Activated CD8-positive, alpha-beta memory T cell treated with anti-CD3 and anti-CD28 coated beads, Interleukin-2, amount 10 ng/mL, durations not matched to agents 7 days and 5 days (primary cell): ENCODE measurements at regions of chr10 and their contacts with region 1.

Region 1: GRCh38 chr10:6401562-6402348 is 178.3 kb downstream of the PRKCQ start:
- DNase-seq: peak; percentile 72
- ATAC-seq: peak; percentile 89
- H3K4me3 Mint-ChIP-seq: no peak overlapping the region
- H3K27ac Mint-ChIP-seq: no peak overlapping the region
- H3K4me1 Mint-ChIP-seq: peaks cover 35% of the 10 kb centered on the region
- H3K27me3 Mint-ChIP-seq: peaks cover 17% of the 10 kb centered on the region

Region 2: DNA sequence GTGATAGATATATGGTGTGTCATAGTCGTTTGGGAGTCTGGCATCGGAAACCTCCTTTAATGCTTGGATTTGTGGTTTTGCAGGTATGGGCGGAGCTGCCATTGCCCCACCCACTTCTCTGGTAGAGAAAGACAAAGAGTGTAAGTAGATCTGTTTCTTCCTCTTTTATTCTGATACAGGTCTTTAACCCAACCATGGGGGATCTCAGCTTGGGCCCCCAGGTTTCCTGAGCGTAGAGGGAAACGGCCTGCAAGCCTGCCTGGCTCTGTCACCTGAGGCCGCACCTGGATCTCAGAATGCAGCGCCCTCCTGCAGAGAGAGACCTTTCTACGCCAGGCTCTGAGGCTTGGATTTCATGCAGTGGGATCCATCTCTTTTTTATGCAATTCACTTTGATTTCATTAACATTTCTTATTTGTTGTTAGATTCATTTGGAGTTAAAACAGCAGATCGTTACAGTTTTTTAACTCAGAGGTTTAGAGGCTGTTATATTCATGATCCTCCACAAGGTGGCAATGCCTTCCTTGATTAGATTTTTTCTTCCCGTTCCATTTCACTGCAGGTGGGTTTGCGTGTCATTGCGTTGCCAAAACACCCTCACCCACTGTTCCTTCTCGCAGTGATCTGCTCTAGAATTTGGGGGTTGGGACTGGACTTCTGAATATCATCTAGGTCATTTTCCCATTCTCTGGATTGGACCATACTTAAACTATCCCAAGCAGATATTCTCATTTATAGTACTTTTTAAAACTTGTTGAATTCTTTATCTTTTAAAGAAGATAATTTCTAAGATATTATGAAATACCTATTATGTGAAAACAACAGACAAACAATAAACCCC is 292.9 kb before region 1 on chr10:
- CTCF ChIA-PET with region 1: interaction called, 23 read pairs
- DNase-seq: peak; percentile 54
- ATAC-seq: peak; percentile 53
- H3K4me3 Mint-ChIP-seq: no peak overlapping the region
- H3K27ac Mint-ChIP-seq: peak overlapping the region; percentile 77
- H3K4me1 Mint-ChIP-seq: peaks cover 34% of the 10 kb centered on the region
- H3K27me3 Mint-ChIP-seq: no peaks in the 10 kb centered on the region

Region 3: GRCh38 chr10:6171881-6172695 is 229.7 kb before region 1 on chr10:
- CTCF ChIA-PET with region 1: interaction called, 45 read pairs
- DNase-seq: no peak
- ATAC-seq: no peak
- H3K4me3 Mint-ChIP-seq: no peak overlapping the region
- H3K27ac Mint-ChIP-seq: no peak overlapping the region
- H3K4me1 Mint-ChIP-seq: peaks cover 55% of the 10 kb centered on the region
- H3K27me3 Mint-ChIP-seq: no peaks in the 10 kb centered on the region

Region 4: GRCh38 chr10:6218692-6219493 is 182.9 kb before region 1 on chr10:
- CTCF ChIA-PET with region 1: interaction called, 12 read pairs
- DNase-seq: no peak
- ATAC-seq: no peak
- H3K4me3 Mint-ChIP-seq: no peak overlapping the region
- H3K27ac Mint-ChIP-seq: no peak overlapping the region
- H3K4me1 Mint-ChIP-seq: no peaks in the 10 kb centered on the region
- H3K27me3 Mint-ChIP-seq: no peaks in the 10 kb centered on the region

Region 5: GRCh38 chr10:6348096-6348874 is 53.5 kb before region 1 on chr10:
- CTCF ChIA-PET with region 1: interaction called, 19 read pairs
- DNase-seq: peak; percentile 91
- ATAC-seq: peak; percentile 94
- H3K4me3 Mint-ChIP-seq: peak overlapping the region; percentile 69
- H3K27ac Mint-ChIP-seq: peak overlapping the region; percentile 93
- H3K4me1 Mint-ChIP-seq: peaks cover 39% of the 10 kb centered on the region
- H3K27me3 Mint-ChIP-seq: no peaks in the 10 kb centered on the region

Region 6: DNA sequence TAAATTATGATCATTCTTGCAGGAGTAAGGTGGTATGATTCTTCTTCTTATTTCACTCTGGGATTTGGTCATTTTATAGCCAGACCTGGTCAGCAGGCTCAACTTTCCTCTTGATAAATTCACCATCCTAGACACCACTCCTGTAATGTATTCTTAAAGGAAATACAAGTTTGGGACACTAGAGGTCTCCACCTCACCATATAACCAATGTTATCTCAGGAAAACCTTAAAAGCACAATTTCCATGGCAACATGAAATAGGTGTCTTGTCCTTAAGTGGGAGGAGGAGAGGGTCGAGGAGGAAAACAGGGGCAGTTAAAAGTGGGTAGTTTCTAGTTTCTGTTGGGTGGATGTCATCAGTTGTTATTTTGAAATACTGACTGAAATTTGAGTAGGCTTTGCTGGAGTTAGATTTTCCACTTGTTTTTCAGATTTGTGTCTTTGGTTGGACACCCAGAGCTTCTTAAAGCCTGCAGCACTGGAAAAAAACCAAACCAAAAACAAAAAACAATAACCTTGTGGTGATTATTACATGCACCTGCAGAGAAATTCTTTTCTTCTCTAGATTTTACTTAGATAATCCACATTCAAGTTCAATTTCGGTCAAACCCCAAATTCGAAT is 15.2 kb after region 1 on chr10:
- CTCF ChIA-PET with region 1: interaction called, 29 read pairs
- DNase-seq: no peak
- ATAC-seq: peak; percentile 82
- H3K4me3 Mint-ChIP-seq: no peak overlapping the region
- H3K27ac Mint-ChIP-seq: no peak overlapping the region
- H3K4me1 Mint-ChIP-seq: no peaks in the 10 kb centered on the region
- H3K27me3 Mint-ChIP-seq: no peaks in the 10 kb centered on the region